Transverse colon (tissue), 4 donors: ENCODE measurements at regions of chr20 and their contacts with region 1.

Region 1: DNA sequence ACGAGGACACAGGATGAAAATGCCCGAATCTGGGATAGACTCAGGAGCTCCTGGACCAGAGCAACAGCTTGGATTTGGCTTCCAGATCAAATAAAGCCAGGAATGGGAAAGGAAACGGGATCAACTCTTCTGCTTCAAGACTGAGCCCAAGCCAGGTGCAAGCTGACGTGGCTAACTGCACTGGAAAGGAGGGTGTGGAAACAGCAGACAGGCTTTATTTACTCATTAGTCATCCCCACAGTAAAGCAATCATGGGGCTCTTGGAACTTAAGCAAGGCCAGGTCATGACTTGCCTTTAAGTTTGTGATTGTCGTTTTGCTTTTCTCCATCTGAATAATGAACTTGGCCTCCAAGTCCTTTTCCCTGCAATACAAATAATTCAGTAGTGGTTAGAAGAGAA is 45.2 kb downstream of the KIF16B start:
- DNase-seq: peak; percentile 78
- H3K4me3 ChIP-seq: no peak overlapping the region
- H3K27ac ChIP-seq: peak overlapping the region; percentile 59 to 78 (median 74)
- H3K4me1 ChIP-seq: peaks cover 4 to 39% (median 17%) of the 10 kb centered on the region in 4 donors
- H3K27me3 ChIP-seq: no peaks in the 10 kb centered on the region
- CTCF ChIP-seq: no peak
- EP300 ChIP-seq: peak; percentile 26
- POLR2A ChIP-seq: peak; percentile 43

Region 2: GRCh38 chr20:16621435-16622141 is 93.5 kb after region 1 on chr20:
- in situ Hi-C with region 1: no loop called
- intact Hi-C with region 1: no loop called
- DNase-seq: no peak
- H3K4me3 ChIP-seq: no peak overlapping the region
- H3K27ac ChIP-seq: no peak overlapping the region
- H3K4me1 ChIP-seq: peaks cover 0 to 8% (median 0%) of the 10 kb centered on the region in 4 donors
- H3K27me3 ChIP-seq: no peaks in the 10 kb centered on the region
- CTCF ChIP-seq: no peak
- EP300 ChIP-seq: no peak
- POLR2A ChIP-seq: no peak

Region 3: DNA sequence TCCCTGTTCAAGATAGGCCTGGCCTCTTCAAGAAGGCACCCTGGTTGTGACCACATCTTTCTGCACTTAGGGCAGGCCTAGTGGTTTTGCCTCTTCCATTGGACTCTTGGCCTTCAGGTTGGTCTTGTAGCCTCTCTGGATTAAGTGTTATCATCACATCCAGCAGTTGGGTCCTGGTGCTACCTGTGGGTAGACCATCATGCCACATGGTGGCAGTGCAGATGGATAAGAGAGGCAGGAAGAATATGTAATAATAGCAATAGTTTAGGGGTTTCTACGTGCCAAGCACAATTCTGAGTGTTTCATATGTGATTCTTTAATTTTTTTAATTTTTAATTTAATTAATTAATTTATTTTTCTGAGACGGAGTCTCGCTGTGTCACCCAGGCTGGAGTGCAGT is 173.2 kb after region 1 on chr20:
- in situ Hi-C with region 1: loop called in 1 of 4 experiments (anchors 25 kb)
- intact Hi-C with region 1: no loop called
- DNase-seq: no peak
- H3K4me3 ChIP-seq: no peak overlapping the region
- H3K27ac ChIP-seq: no peak overlapping the region
- H3K4me1 ChIP-seq: no peaks in the 10 kb centered on the region
- H3K27me3 ChIP-seq: no peaks in the 10 kb centered on the region
- CTCF ChIP-seq: peak in 2 of 5 experiments; percentile 8 to 12
- EP300 ChIP-seq: no peak
- POLR2A ChIP-seq: no peak